Gastrocnemius medialis (tissue), 4 donors: ENCODE measurements at regions of chr19 and their contacts with region 1.

Region 1: GRCh38 chr19:7903244-7904073 is at the start of gene MAP2K7:
- DNase-seq: peak; percentile 99 to 100
- ATAC-seq: peak; percentile 95 to 97
- H3K4me3 ChIP-seq: peak within 1 kb of the TSS; percentile 82 to 97 (median 90)
- H3K27ac ChIP-seq: peak within 1 kb of the TSS; percentile 86 to 92 (median 90)
- H3K4me1 ChIP-seq: peaks cover 22 to 37% of the 10 kb centered on the region in 2 donors
- H3K27me3 ChIP-seq: no peaks in the 10 kb centered on the region
- CTCF ChIP-seq: peak in 4 of 5 experiments; percentile 22 to 55 (median 38)
- POLR2A ChIP-seq: peak; percentile 84 to 86
- total RNA-seq, gene MAP2K7: 17.7 to 41.7 (median 32.9) TPM

Region 2: DNA sequence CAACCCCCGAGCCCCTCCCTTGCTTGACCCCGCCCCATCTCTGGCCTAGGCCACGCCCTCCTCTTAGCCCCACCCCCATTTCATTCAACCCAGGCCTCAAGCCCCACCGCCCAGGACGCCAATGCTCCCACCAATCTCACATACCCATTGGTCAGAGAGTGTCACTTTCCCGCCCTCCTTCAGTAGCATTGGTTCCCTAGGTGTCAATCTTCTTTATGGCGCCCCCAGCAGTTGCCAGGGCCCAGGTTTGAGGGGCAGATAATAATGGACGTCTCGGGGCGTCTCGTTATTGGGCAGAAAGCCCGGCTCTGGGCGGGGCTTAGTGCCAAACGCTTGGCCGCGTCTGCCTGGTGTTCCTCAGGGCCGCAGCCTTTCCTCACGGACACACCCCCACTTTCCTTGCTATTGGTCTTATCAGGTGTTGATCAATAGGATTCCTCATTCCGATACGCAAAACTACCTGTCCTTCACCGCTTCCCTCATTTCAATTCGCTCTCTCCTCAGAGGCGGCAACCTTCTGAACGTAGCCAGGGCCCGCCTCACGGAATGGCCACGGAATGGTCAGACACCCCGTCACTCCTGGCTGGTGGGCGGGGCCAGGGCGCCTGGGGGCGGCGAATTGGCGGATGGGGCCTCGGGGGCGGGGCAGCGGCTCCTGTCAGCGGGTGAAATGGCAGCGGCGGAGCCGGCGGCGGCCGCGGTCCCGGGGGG is 73.7 kb before region 1 on chr19 and contains the start of gene EVI5L:
- in situ Hi-C with region 1: no loop called
- intact Hi-C with region 1: loop called (anchors 1 kb)
- DNase-seq: peak; percentile 98 to 99
- ATAC-seq: peak; percentile 96 to 98
- H3K4me3 ChIP-seq: peak within 1 kb of the TSS; percentile 70 to 83 (median 74)
- H3K27ac ChIP-seq: peak within 1 kb of the TSS; percentile 51 to 73 (median 61)
- H3K4me1 ChIP-seq: peaks cover 14 to 16% of the 10 kb centered on the region in 2 donors
- H3K27me3 ChIP-seq: peaks cover 0 to 9% (median 4%) of the 10 kb centered on the region in 3 donors
- CTCF ChIP-seq: no peak
- POLR2A ChIP-seq: no peak
- total RNA-seq, gene EVI5L: 17.5 to 24.6 (median 20.4) TPM

Region 3: DNA sequence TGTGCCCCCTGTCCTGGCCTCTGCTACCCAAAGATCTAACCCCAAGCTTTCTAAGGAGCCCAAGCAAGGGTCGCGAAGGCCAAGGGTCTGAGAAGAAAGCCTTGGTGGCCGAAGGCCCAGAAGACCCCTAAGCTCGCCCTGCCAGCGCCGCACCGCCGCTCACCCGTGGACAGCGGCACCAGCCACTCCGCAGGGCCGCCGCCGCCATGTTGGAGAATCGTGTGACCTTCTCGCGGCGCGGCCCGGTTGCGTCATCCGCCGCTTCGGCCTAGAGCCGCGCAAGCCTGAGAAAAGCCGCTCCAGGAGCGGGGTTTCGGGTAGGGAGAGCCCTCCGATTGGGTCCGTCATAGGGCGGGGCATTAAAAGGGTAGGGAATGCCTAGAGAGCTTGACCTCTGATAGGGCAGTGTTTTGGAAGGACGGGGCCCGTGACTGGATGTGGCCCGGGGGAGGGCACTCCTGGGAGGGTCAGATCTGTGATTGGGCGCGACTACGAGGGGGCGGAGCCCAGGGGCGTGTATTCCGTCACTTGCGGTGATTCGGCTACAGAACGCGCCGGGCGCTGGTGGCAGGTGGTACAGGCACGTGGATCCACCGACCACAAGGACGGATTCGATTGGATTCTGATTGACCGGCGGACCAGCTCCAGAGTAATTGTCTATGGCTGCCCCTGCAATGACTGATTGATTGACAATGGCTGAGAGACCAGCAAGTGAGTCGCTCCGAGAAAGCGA is 40.2 kb after region 1 on chr19 and contains the start of gene TIMM44:
- in situ Hi-C with region 1: no loop called
- intact Hi-C with region 1: loop called (anchors 1 kb)
- DNase-seq: peak; percentile 100
- ATAC-seq: peak; percentile 97 to 98
- H3K4me3 ChIP-seq: peak within 1 kb of the TSS; percentile 67 to 97 (median 82)
- H3K27ac ChIP-seq: peak within 1 kb of the TSS; percentile 94 to 100 (median 98)
- H3K4me1 ChIP-seq: peaks cover 10 to 19% of the 10 kb centered on the region in 2 donors
- H3K27me3 ChIP-seq: no peaks in the 10 kb centered on the region
- CTCF ChIP-seq: no peak
- POLR2A ChIP-seq: peak; percentile 92 to 97
- total RNA-seq, gene TIMM44: 53.9 to 168 (median 94.1) TPM